A549 (cell line): ENCODE measurements at regions of chr17 and their contacts with region 1.

Region 1: DNA sequence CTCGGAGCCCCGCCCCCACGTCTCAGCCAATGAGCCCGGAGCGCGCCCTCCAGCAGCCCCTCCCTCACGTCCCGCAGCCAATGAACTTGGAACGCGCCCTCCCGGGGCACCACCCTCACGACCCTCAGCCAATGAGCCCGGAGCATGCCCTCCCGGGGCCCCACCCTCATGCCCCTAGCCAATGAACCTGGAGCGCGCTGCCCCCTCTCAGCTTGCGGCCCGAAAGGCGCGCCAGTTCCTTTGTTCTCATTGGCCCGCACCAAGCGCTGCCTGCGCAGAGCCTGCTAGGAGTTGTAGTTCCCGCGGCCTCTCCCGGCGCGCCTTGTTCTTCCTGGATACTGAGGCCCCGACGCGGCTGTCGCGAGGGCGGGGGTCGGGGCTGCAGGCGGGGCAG is at the start of gene LRRC45:
- DNase-seq: peak; percentile 99 to 100
- ATAC-seq: peak; percentile 67 to 89
- H3K4me3 ChIP-seq: peak within 1 kb of the TSS; percentile 77
- H3K27ac ChIP-seq: peak within 1 kb of the TSS; percentile 80 to 92
- H3K4me1 ChIP-seq: peaks cover 39% of the 10 kb centered on the region
- CTCF ChIP-seq: no peak
- EP300 ChIP-seq: no peak
- POLR2A ChIP-seq: no peak
- RAD21 ChIP-seq: no peak
- polyA plus RNA-seq, gene LRRC45: 6.0 and 6.4 TPM in 2 replicates

Region 2: DNA sequence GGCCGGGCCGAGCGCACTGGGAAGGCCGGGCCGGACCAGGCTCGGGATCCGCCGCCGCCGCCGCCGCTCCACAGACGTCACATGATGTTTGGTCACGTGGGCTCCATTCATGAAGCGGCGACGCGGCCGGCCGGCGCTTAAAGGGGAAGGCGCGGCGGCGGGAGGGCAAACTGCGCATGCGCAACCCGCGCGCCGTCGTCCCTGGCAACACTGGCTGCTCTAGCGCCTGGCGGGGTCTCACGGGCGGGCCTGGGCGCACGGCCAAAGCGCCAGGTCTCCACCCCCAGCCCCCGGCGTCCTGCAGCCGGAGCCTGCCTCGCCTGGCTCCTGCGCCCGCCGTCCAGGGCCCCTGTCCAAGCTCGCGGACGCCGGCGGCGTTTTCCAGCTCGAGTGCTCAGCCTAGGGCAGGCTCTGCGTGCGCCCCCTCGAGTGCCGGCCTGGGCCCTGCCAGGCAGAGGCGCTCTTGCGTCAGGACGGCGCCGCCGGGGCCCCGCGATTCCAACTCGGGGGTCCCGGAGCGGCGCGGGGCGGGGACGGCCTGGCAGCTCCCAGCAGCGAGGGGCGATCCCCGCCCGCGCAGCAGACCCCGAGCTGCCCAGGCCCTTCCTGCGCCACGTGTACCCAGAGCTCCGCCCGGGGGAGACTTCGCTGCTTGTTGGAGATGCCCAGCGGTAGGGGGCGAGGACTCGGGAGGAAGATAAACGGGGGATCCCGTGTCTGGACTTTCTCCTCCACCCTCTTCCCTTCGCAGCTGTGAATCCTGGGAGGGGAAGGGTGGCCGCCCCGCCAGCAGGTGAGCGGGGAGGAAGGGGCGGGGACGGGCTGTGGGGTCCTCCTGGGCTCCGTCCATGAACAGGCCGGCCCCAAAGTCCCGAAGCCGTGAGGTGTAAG is 95.1 kb before region 1 on chr17 and contains the start of gene MAFG:
- CTCF ChIA-PET with region 1: interaction called, 41 read pairs
- POLR2A ChIA-PET with region 1: interaction called, 4 read pairs
- DNase-seq: peak; percentile 96 to 98
- ATAC-seq: peak; percentile 20 to 40
- H3K4me3 ChIP-seq: peak within 1 kb of the TSS; percentile 90
- H3K27ac ChIP-seq: peak within 1 kb of the TSS; percentile 96 to 98
- H3K4me1 ChIP-seq: peaks cover 36% of the 10 kb centered on the region
- CTCF ChIP-seq: peak; percentile 74
- EP300 ChIP-seq: no peak
- POLR2A ChIP-seq: peak; percentile 33
- RAD21 ChIP-seq: peak in 1 of 2 experiments; percentile 54; a peak in 3 of 5 replicates
- polyA plus RNA-seq, gene MAFG: 41.6 and 47.9 TPM in 2 replicates

Region 3: DNA sequence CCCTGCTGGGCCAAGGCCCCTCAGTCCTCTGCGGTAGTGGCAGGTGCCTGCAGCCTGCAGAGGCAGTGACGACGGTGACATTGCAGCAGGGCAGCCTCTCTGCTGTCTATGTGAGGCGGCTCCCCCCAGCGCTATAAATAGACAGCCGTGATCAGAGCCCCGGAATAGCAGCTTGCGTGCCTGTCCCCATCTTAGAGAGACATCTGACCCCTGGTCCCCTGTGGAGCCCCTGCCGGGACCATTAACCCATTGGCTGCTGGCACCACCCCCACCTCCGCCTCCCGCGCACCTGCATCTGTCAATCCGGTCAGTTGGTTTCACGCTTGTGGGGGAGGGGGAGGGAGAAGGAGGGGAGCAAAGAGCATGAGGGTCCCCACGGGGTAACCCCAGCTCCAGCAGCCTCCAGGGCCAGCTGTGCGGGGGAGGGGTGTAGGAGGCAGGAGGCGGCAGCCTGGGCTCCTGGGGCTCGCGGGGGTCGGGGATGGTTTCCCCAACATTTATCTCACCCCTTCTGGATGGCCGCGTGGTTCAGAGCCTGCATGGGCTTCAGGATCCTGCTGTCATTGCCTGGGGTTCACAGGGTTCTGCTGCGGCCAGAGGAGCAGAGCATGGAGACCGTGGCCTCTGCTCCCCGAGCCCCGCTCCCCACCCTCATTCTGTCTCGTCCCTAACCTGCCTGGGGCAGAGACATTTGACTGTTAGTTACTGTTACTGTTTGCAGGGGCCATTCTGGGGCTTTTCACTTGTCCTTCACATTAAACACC is 81.0 kb before region 1 on chr17:
- CTCF ChIA-PET with region 1: interaction called, 170 read pairs
- POLR2A ChIA-PET with region 1: no interaction called
- DNase-seq: no peak
- ATAC-seq: no peak
- H3K4me3 ChIP-seq: no peak overlapping the region
- H3K27ac ChIP-seq: no peak overlapping the region
- H3K4me1 ChIP-seq: peaks cover 4% of the 10 kb centered on the region; the same call in 2 of the 3 replicates
- CTCF ChIP-seq: no peak
- EP300 ChIP-seq: no peak
- POLR2A ChIP-seq: no peak
- RAD21 ChIP-seq: no peak

Region 4: GRCh38 chr17:81991684-81992305 is 31.2 kb before region 1 on chr17:
- CTCF ChIA-PET with region 1: interaction called, 40 read pairs
- POLR2A ChIA-PET with region 1: no interaction called
- DNase-seq: peak in 1 of 2 experiments; percentile 50
- ATAC-seq: peak; percentile 38 to 61
- H3K4me3 ChIP-seq: no peak overlapping the region
- H3K27ac ChIP-seq: peak overlapping the region in 1 of 2 experiments; percentile 61; a peak in 4 of 6 replicates
- H3K4me1 ChIP-seq: peaks cover 17% of the 10 kb centered on the region
- CTCF ChIP-seq: no peak
- EP300 ChIP-seq: no peak
- POLR2A ChIP-seq: no peak
- RAD21 ChIP-seq: no peak

Region 5: GRCh38 chr17:82037113-82037888 is 14.3 kb after region 1 on chr17 and contains the start of gene DCXR:
- CTCF ChIA-PET with region 1: interaction called, 59 read pairs
- POLR2A ChIA-PET with region 1: interaction called, 38 read pairs
- DNase-seq: peak; percentile 99
- ATAC-seq: peak; percentile 89 to 96
- H3K4me3 ChIP-seq: peak within 1 kb of the TSS; percentile 52
- H3K27ac ChIP-seq: peak within 1 kb of the TSS; percentile 72 to 89
- H3K4me1 ChIP-seq: peaks cover 9% of the 10 kb centered on the region; the same call in 2 of the 3 replicates
- CTCF ChIP-seq: peak; percentile 89
- EP300 ChIP-seq: peak in 1 of 2 experiments; percentile 18; a peak in 1 of 5 replicates
- POLR2A ChIP-seq: peak; percentile 84
- RAD21 ChIP-seq: peak in 1 of 2 experiments; percentile 47; a peak in 2 of 5 replicates
- polyA plus RNA-seq, gene DCXR: 39.3 and 48.3 TPM in 2 replicates